ENCODE measurements at regions of chr6 and their contacts with region 1.

Region 1: DNA sequence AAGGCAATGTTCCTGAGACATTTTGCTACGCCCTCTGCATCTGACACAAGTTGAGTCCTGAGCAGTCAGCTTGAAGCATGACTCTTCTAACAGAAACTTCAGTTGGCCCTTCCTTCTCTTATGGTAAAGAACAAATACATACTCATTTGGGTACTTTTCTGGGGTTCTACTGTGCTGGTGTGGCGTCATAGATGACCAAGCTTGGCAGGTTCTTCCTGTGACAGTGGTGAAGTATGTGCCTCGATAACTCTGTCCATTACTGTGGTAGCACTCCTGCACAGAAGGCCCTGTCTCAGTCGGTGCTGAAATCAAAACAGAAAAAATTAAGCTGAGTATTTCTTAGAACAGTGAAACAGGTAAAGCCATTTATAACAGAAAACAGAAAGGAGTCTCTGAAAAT is 152.5 kb downstream of the SLC22A3 start:
- DNase-seq: peak; percentile 84
- ATAC-seq: peak; percentile 88
- H3K4me3 Mint-ChIP-seq: no peak overlapping the region
- H3K27ac Mint-ChIP-seq: peak overlapping the region; percentile 94
- H3K4me1 Mint-ChIP-seq: peaks cover 35% of the 10 kb centered on the region
- H3K27me3 Mint-ChIP-seq: no peaks in the 10 kb centered on the region

Region 2: GRCh38 chr6:160297310-160297709 is 203.3 kb before region 1 on chr6:
- CTCF ChIA-PET with region 1: no interaction called
- DNase-seq: no peak
- ATAC-seq: no peak
- H3K4me3 Mint-ChIP-seq: no peak overlapping the region
- H3K27ac Mint-ChIP-seq: no peak overlapping the region
- H3K4me1 Mint-ChIP-seq: no peaks in the 10 kb centered on the region
- H3K27me3 Mint-ChIP-seq: no peaks in the 10 kb centered on the region

Region 3: DNA sequence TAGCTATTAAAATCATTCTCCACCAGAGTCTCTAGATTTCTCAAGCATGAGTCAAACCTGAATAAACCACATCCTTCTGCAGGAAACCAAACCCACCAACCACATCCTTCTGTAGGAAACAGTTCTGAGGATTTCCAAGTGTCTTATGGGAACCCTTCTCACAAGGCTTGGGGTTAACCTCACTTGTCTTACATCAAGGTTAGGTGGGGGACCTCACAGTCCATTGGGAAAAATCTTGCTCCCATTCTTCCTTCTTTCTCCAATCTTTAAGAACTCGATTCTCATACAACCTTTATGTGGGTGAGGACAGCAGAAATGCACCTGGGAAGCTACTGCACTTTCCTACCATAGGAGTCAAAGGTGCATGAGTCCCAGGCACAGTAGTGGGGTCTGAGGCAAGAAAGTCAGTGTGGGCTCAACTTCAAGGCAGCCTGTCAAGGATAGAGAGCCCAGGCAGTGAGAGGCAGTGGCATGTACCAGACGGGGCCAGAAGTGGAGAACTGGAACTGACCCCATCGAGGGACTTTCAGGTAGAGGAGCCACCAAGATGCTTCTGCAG is 38.0 kb before region 1 on chr6:
- CTCF ChIA-PET with region 1: interaction called, 10 read pairs
- DNase-seq: peak; percentile 88
- ATAC-seq: peak; percentile 82
- H3K4me3 Mint-ChIP-seq: no peak overlapping the region
- H3K27ac Mint-ChIP-seq: peak overlapping the region; percentile 61
- H3K4me1 Mint-ChIP-seq: peaks cover 51% of the 10 kb centered on the region
- H3K27me3 Mint-ChIP-seq: peaks cover 6% of the 10 kb centered on the region

Region 4: DNA sequence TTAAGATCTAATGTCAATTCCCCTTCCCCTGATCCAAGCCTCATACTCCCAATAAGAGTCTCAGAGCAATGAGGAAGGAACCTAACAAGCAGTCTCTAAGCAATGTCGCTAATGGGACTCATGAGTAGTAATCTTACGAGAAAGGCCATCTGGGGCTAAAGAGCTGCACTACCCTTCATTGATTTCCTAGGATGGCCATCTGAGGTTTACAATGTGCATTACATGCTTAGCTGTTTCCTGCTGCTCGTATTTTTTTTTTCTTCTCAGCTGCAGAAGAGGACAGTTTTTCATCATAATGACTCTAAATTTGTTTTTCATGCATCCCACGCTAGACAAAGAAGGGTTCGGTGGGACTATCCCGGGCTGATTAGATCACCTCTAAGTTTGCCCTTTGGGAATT is 44.2 kb after region 1 on chr6:
- CTCF ChIA-PET with region 1: no interaction called
- DNase-seq: no peak
- ATAC-seq: no peak
- H3K4me3 Mint-ChIP-seq: no peak overlapping the region
- H3K27ac Mint-ChIP-seq: no peak overlapping the region
- H3K4me1 Mint-ChIP-seq: no peaks in the 10 kb centered on the region
- H3K27me3 Mint-ChIP-seq: peaks cover 26% of the 10 kb centered on the region